ENCODE measurements at regions of chr11 and their contacts with region 1.

Region 1: DNA sequence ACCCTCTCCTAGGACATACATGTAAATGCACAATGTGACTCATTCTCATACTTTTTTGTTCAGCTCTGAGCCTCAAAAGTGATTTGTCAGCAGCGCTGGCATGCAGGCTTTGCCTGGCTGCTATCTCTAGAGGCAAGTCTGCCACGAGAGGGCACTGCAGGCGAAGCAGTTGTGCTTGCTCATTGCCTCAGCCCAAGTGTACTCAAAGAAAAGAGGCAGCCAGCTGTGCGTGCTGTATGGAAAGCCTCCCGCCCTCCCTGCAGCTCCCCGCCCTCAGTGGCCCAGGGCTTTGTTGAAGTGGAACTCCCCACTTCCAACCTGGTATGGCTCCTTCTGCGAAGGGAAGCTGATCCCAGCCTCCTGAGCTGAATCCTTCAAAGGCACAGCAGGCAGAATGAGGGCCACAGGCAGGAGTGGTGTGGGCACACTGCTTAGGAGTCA is 16.3 kb downstream of the SDHAF2 start:
- DNase-seq: peak; percentile 95
- ATAC-seq: peak; percentile 93
- H3K4me3 Mint-ChIP-seq: no peak overlapping the region
- H3K27ac Mint-ChIP-seq: peak overlapping the region; percentile 82; the same call in 1 of the 2 replicates
- H3K4me1 Mint-ChIP-seq: no peaks in the 10 kb centered on the region
- H3K27me3 Mint-ChIP-seq: no peaks in the 10 kb centered on the region
- CTCF ChIP-seq: peak; percentile 47

Region 2: GRCh38 chr11:61091373-61092279 is 354.6 kb before region 1 on chr11:
- CTCF ChIA-PET with region 1: no interaction called
- POLR2A ChIA-PET with region 1: no interaction called
- DNase-seq: no peak
- ATAC-seq: no peak; the same call in 1 of the 2 replicates
- H3K4me3 Mint-ChIP-seq: no peak overlapping the region
- H3K27ac Mint-ChIP-seq: no peak overlapping the region
- H3K4me1 Mint-ChIP-seq: peaks cover 12% of the 10 kb centered on the region
- H3K27me3 Mint-ChIP-seq: no peaks in the 10 kb centered on the region; the same call in 1 of the 2 replicates
- CTCF ChIP-seq: no peak

Region 3: GRCh38 chr11:61429691-61430582 is 16.3 kb before region 1 on chr11 and contains the starts of genes CPSF7 and SDHAF2:
- CTCF ChIA-PET with region 1: interaction called, 69 read pairs
- POLR2A ChIA-PET with region 1: interaction called, 4 read pairs
- DNase-seq: peak; percentile 97
- ATAC-seq: peak; percentile 86
- H3K4me3 Mint-ChIP-seq: peak within 1 kb of the TSS; percentile 100
- H3K27ac Mint-ChIP-seq: peak within 1 kb of the TSS; percentile 100
- H3K4me1 Mint-ChIP-seq: peaks cover 20% of the 10 kb centered on the region
- H3K27me3 Mint-ChIP-seq: no peaks in the 10 kb centered on the region
- CTCF ChIP-seq: no peak
- total RNA-seq, gene CPSF7: 86.0 to 90.7 TPM (median 88.3 TPM) in 3 replicates
- total RNA-seq, gene SDHAF2: 36.2 to 36.8 TPM (median 36.5 TPM) in 3 replicates

Region 4: GRCh38 chr11:61488651-61489291 is 42.5 kb after region 1 on chr11:
- CTCF ChIA-PET with region 1: interaction called, 10 read pairs
- POLR2A ChIA-PET with region 1: no interaction called
- DNase-seq: peak; percentile 76
- ATAC-seq: peak; percentile 60
- H3K4me3 Mint-ChIP-seq: peak overlapping the region; percentile 50
- H3K27ac Mint-ChIP-seq: peak overlapping the region; percentile 95
- H3K4me1 Mint-ChIP-seq: peaks cover 42% of the 10 kb centered on the region
- H3K27me3 Mint-ChIP-seq: peaks cover 7% of the 10 kb centered on the region; the same call in 1 of the 2 replicates
- CTCF ChIP-seq: no peak

Region 5: GRCh38 chr11:61509043-61510029 is 63.1 kb after region 1 on chr11:
- CTCF ChIA-PET with region 1: interaction called, 153 read pairs
- POLR2A ChIA-PET with region 1: no interaction called
- DNase-seq: peak; percentile 80
- ATAC-seq: peak; percentile 63
- H3K4me3 Mint-ChIP-seq: peak overlapping the region; percentile 48
- H3K27ac Mint-ChIP-seq: no peak overlapping the region
- H3K4me1 Mint-ChIP-seq: peaks cover 58% of the 10 kb centered on the region
- H3K27me3 Mint-ChIP-seq: peaks cover 59% of the 10 kb centered on the region
- CTCF ChIP-seq: no peak

Region 6: DNA sequence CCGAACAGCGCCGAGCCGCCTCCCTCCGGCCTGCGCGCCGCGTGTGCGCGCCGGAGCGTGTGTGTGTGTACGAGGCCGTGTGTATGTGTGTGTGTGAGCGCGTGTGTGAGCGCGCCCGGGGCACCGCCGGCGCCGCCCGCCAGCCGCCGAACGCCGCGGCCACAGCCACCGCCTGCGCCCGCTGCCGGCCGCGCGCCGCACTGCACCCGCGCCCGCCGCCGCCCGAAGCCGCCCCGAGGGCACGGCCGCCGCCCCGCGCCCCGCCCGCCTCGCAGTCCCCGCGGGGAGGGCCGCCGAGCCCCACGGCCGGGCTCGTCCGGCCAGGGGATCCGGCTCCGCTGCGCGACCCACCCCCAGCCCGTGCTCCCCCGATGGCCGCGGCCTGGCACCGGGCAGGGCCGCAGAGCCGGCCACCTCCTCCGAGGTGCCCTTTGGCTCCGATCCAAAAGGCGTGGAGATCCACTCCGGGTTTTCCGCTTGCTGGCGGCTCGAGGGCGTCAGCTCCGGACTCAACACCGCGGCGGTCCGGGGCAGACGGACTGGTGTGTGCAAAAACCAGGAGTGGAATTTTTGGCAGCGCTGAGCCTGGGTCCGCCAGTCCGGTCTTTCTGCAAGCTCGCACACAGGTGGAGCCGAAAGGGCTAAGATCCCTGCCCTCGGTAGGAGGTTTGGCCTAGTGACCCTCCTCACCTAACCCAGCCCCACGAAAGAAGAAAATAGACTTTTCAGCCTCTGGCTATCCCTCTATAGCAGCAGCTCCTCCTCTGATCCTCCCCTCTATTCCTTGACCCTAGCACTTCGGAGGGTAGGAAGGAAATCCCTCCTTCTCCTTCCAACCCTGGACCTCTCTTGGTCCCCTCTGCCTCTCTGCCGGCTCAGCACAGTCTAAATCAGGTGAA is 135.0 kb after region 1 on chr11 and contains the start of gene SYT7:
- CTCF ChIA-PET with region 1: interaction called, 14 read pairs
- POLR2A ChIA-PET with region 1: no interaction called
- DNase-seq: peak; percentile 99
- ATAC-seq: peak; percentile 83
- H3K4me3 Mint-ChIP-seq: peak within 1 kb of the TSS; percentile 79
- H3K27ac Mint-ChIP-seq: no peak within 1 kb of the TSS
- H3K4me1 Mint-ChIP-seq: peaks cover 56% of the 10 kb centered on the region
- H3K27me3 Mint-ChIP-seq: peaks cover 61% of the 10 kb centered on the region
- CTCF ChIP-seq: no peak; the same call in 1 of the 2 replicates
- total RNA-seq, gene SYT7: 12.5 to 18.9 TPM (median 18.2 TPM) in 3 replicates

Measured in WTC11 (cell line).